Activated T-helper 2 cell treated with anti-CD3 and anti-CD28 coated beads, Interferon-gamma antibody, Interleukin-2, Interleukin-4, amounts not matched to agents 10 μg/mL and 5 μg/mL and 100 μg/mL, durations not matched to agents 14 hours and 24 hours and 36 hours (primary cell): ENCODE measurements at regions of chr11 and their contacts with region 1.

Region 1: GRCh38 chr11:111414267-111414931 is 35.3 kb upstream of the POU2AF1 start:
- DNase-seq: no peak
- H3K4me3 Mint-ChIP-seq: peak overlapping the region; percentile 28
- H3K27ac Mint-ChIP-seq: peak overlapping the region; percentile 88
- H3K4me1 Mint-ChIP-seq: peaks cover 68% of the 10 kb centered on the region
- H3K27me3 Mint-ChIP-seq: no peaks in the 10 kb centered on the region

Region 2: GRCh38 chr11:111370902-111371578 is 43.4 kb before region 1 on chr11:
- intact Hi-C with region 1: loop called (anchors 1 kb)
- DNase-seq: no peak
- H3K4me3 Mint-ChIP-seq: peak overlapping the region; percentile 14
- H3K27ac Mint-ChIP-seq: peak overlapping the region; percentile 89
- H3K4me1 Mint-ChIP-seq: peaks cover 57% of the 10 kb centered on the region
- H3K27me3 Mint-ChIP-seq: no peaks in the 10 kb centered on the region